ENCODE measurements at regions of chr2 and their contacts with region 1.

Region 1: DNA sequence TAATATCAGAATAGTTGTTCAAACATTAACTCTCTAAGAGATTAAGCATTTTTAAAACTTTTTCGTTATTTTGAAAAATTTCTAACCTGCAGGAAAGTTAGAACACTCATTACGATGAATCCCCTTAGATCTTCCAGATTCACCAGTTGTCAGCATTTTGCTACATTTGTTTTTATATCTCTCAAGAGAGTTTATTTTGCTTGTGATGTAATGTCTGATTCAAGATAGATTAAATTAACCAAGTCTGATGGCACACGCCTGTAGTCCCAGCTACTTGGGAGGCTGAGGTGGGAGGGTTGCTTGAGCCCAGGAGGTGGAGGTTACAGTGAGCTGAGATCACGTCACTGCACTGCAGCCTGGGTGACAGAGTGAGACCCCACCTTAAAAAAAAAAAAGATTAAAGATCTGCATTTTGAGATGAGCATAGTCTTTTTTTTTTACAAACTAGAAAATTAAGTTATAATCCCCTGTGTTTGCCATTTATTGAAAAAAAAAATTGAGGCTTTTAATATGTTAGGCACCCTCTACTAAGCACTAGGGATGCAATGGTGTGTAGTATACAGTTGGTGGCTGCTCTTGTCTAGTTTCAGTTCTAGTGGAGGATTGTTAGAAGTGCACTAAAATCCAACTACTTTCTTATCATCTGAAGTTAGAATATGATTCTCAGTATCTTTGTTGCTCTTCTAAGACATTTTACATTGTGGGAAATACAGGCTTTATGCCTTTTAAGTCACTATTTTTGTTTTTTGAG is 20.9 kb downstream of the RAB10 start:
- DNase-seq: no peak
- ATAC-seq: peak; percentile 35; the same call in 1 of the 2 replicates
- H3K4me3 ChIP-seq: no peak overlapping the region
- H3K27ac ChIP-seq: no peak overlapping the region
- H3K4me1 ChIP-seq: no peaks in the 10 kb centered on the region
- H3K27me3 ChIP-seq: no peaks in the 10 kb centered on the region
- CTCF ChIP-seq: no peak

Region 2: DNA sequence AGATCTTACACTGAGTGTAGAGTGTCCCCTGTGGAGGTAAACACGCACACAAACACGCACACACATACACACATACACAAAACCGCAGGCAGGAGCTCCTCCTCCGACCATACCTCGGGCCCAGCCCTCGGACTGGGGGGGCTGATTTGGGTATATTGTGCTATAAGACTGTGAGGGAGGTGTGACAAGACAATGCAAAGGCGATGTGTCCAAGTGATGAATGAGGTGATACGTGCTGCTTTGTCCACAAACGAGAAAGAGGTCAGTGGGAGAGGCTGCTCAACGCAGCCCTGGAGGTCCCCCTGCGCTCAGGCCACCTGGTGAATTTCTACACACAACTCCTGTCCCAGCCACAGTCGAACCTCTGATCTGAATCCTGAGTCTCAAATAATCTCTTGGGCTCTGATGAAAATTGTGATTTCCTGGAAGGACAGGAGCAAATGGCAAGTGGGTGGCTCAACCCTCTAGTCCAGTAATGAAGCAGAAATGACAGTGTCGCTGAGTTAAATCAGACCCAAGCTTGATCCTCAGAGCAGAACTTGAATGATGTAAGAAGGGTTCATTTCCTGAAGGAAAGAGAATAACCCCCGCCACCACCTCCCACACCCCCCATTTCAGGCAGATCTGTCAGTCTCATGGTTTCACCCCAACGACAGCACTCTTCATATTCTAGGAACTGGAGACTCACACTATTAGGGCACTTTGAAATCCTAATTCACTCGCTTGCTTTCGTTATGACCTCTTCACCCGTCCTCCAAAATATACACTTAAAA is 127.6 kb before region 1 on chr2:
- CTCF ChIA-PET with region 1: no interaction called
- POLR2A ChIA-PET with region 1: no interaction called
- intact Hi-C with region 1: no loop called
- DNase-seq: no peak
- ATAC-seq: no peak
- H3K4me3 ChIP-seq: no peak overlapping the region
- H3K27ac ChIP-seq: no peak overlapping the region
- H3K4me1 ChIP-seq: no peaks in the 10 kb centered on the region
- H3K27me3 ChIP-seq: no peaks in the 10 kb centered on the region
- CTCF ChIP-seq: no peak

Region 3: DNA sequence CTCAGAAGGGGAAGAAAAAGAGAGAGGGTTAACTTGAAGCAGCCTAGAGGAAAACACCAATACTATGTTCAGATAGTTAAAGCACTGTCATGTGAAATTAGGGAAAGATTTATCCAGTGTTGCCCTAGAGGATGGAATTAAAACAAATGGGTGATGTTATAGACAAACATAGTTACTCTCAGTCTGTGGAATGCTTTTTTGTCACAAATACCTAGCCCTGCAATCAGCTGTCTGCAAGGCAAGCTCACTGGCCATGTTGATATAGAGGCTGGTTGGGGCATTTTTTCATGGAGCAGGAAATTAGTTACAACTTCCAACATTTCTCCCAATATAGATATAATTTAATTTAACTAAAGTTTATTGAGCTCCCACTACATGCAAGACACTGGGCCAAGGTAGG is 29.3 kb before region 1 on chr2:
- CTCF ChIA-PET with region 1: no interaction called
- POLR2A ChIA-PET with region 1: no interaction called
- intact Hi-C with region 1: no loop called
- DNase-seq: no peak
- ATAC-seq: no peak
- H3K4me3 ChIP-seq: no peak overlapping the region
- H3K27ac ChIP-seq: no peak overlapping the region
- H3K4me1 ChIP-seq: no peaks in the 10 kb centered on the region
- H3K27me3 ChIP-seq: no peaks in the 10 kb centered on the region
- CTCF ChIP-seq: no peak

Region 4: GRCh38 chr2:26075963-26076605 is 21.3 kb after region 1 on chr2:
- CTCF ChIA-PET with region 1: no interaction called
- POLR2A ChIA-PET with region 1: interaction called, 12 read pairs
- intact Hi-C with region 1: no loop called
- DNase-seq: peak; percentile 67
- ATAC-seq: peak; percentile 33
- H3K4me3 ChIP-seq: peak overlapping the region; percentile 5; the same call in 1 of the 2 replicates
- H3K27ac ChIP-seq: peak overlapping the region; percentile 40
- H3K4me1 ChIP-seq: peaks cover 81% of the 10 kb centered on the region
- H3K27me3 ChIP-seq: no peaks in the 10 kb centered on the region
- CTCF ChIP-seq: no peak